Sciatic nerve (tissue), 2 donors: ENCODE measurements at regions of chr18 and their contacts with region 1.

Region 1: DNA sequence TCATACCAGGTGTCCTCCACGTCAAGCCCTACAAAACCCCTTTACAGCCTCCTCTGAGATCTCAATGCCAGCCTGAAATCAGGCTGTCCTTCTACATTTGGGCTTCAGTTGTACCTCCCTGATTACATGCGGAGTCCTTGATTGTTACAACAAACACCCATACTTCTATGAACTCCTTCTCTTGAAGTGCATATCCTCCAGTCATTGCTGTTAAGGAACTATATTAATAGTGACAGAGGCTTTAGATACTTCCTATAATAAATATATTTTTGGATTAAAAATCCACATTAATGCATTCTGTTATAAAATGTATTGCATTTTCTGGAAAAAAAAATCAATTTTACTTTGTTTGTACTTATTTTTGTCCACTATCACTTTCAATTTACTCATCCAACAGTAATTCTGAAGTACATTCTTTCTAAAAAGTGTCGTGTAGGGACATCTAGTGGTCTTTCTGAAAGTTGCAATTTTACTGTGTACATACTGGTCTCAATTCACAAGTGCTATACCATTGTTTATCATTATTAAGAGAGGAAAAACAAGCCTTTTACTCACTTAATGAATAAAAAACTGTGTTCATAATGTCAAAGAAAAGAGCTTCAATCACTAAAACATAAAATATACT is 316.4 kb downstream of the DSEL start:
- DNase-seq: no peak
- ATAC-seq: peak; percentile 45

Region 2: DNA sequence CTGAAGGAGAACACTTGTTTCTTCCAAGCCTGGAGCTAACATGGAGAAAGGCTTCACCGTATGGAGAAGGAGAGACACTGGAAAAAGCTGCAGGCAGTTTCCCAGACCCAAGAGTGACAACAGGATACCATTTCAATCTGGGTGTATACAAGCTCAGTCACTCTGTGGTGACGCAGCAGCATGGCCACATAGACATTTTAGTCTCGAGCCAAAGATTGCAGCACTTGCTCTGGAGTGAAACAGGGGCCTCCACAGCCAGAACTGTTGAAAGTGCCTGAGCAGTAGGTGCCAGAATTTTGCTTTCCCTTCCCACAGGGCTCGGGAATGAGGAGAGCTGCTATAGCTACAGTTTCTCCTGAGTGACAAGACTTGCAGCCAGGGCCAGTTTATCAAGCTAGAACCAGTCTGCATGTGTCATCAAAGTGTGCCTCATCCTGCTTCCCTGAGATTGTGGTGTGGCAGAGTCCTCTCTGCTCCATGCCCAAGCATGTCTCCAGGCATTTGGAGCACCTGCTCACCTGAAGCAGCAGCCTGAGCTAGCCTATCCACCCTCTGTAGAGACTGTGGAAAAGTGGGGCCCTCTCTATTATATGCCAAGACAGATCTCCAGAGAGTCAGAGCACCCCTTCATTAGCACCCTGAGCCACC is 361.6 kb before region 1 on chr18:
- intact Hi-C with region 1: no loop called
- DNase-seq: no peak
- ATAC-seq: no peak

Region 3: GRCh38 chr18:67104700-67105284 is 95.3 kb before region 1 on chr18:
- intact Hi-C with region 1: loop called (anchors 5 kb)
- DNase-seq: peak; percentile 76
- ATAC-seq: peak; percentile 76

Region 4: DNA sequence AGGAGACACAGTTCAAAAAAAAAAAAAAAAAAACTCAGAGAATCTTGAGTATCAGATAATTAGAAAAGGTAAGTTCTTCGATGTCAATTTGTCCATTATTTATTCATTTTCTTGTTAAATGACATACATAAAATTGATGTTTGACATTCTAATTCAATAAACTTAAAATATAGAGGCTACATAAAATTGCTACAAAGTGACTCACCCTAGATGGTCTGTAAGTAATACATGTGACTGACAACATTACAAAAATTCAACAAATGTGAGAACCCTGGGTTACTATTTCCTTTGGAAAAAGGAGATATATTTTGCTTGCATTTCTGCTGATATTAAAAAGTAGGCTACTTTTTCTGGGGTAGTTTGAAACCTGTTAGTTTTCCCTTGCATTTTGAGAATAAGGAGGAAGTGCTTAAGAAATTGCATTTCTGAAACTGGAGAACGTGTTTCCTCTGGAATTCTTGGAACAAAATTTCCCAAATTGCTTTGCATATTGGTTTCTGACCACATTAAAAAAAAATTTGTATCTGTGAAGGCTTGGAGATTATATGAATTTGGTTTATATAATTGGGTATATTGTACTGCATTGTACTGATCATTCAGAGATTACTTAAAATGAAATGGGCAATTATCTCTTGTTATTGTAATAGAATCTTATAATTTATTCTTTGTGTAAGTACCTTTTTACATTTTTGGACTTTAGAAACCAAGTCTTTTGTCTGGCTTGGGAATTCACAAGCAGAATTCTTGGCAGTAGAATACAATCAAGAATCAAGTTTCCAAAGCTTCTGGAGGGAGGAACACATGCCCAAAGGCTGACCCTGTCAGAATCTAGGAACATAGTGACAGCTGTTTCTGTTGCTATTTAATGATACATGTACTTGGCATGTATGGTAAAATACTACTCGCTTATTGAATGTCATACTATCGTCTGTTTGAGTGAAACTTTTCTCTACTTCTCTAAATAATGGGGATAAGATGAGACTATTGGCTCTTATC is 210.3 kb after region 1 on chr18:
- intact Hi-C with region 1: no loop called
- DNase-seq: no peak
- ATAC-seq: no peak